CD8-positive, alpha-beta T cell (primary cell): ENCODE measurements at regions of chr9 and their contacts with region 1.

Region 1: DNA sequence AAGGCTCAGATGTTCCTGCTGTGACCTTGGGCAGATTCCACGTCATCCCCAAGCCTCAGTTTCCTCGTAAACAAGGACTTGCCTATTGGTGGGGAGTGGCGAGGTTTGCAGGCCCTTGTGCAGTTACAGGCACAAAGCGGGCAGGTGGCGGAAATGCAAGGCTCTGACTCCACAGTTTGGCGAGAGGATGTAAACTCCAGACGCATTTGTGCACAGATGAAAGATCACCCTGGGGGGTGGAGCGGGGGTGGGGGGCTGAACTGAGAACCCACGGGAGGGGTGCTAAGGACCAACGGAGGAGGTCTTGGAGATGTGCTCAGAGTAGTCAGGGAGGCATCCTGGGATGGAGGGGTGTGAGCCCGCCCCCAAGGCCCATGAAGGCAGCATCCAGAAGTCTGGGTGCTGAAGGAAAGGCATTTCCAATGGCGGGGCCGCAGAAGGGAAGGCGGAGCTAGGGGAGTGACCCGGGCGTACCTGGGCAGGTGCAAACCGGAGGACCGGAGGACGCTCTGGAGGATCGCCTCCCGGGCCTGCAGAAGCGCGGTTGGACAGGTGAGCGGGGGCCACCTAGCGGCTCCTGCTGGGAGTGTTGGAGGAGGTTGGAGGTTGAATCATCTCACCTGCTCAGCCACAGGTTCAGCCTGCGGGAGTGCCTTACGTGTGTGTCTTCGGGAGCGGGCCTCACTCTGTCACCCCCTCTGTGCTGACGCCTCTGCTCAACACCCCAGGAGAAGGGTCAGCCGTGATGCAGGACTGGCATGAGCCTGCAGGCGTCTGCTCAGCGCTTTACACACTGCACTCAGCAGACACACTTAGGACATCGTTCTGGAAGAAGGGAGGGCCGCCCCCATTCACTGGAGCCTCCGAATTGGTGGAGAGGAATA is 1.9 kb upstream of the FIBCD1 start:
- DNase-seq: peak; percentile 55 to 82 (median 68)
- ATAC-seq: peak; percentile 88
- H3K4me3 ChIP-seq: peak overlapping the region in 1 of 2 experiments; percentile 1
- H3K4me3 Mint-ChIP-seq: peak overlapping the region; percentile 18
- H3K27ac ChIP-seq: no peak overlapping the region
- H3K27ac Mint-ChIP-seq: no peak overlapping the region
- H3K4me1 ChIP-seq: peaks cover 10% of the 10 kb centered on the region
- H3K4me1 Mint-ChIP-seq: peaks cover 7% of the 10 kb centered on the region
- H3K27me3 ChIP-seq: peaks cover 5 to 6% of the 10 kb centered on the region in 2 experiments
- H3K27me3 Mint-ChIP-seq: peaks cover 46% of the 10 kb centered on the region
- CTCF ChIP-seq: peak; percentile 68

Region 2: DNA sequence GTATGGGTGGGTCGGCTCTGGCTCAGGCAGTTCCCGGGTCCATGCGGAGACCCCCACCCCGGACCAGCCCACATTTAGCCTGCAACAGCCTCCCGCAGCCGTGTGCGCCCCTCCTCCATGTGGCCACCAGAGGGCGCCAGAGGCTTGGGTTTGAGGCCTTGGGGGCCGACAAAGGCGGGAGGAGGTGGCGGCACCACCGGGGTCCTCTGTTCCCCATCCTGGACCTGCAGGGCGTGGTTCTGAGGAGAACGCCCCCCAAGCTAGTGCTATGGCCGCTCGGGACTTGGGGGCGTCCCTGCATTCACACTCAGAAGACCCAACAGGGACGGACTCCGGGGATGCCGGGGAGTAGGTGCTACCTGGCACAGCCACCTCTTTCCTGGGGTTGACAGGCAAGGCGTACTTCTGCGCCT is 479.7 kb before region 1 on chr9:
- CTCF ChIA-PET with region 1: no interaction called
- POLR2A ChIA-PET with region 1: no interaction called
- intact Hi-C with region 1: loop called (anchors 2 to 5 kb)
- DNase-seq: peak; percentile 48 to 86 (median 71)
- ATAC-seq: peak; percentile 65
- H3K4me3 ChIP-seq: no peak overlapping the region
- H3K4me3 Mint-ChIP-seq: no peak overlapping the region
- H3K27ac ChIP-seq: no peak overlapping the region
- H3K27ac Mint-ChIP-seq: no peak overlapping the region
- H3K4me1 ChIP-seq: no peaks in the 10 kb centered on the region
- H3K4me1 Mint-ChIP-seq: no peaks in the 10 kb centered on the region
- H3K27me3 ChIP-seq: no peaks in the 10 kb centered on the region
- H3K27me3 Mint-ChIP-seq: peaks cover 24% of the 10 kb centered on the region
- CTCF ChIP-seq: peak; percentile 82

Region 3: DNA sequence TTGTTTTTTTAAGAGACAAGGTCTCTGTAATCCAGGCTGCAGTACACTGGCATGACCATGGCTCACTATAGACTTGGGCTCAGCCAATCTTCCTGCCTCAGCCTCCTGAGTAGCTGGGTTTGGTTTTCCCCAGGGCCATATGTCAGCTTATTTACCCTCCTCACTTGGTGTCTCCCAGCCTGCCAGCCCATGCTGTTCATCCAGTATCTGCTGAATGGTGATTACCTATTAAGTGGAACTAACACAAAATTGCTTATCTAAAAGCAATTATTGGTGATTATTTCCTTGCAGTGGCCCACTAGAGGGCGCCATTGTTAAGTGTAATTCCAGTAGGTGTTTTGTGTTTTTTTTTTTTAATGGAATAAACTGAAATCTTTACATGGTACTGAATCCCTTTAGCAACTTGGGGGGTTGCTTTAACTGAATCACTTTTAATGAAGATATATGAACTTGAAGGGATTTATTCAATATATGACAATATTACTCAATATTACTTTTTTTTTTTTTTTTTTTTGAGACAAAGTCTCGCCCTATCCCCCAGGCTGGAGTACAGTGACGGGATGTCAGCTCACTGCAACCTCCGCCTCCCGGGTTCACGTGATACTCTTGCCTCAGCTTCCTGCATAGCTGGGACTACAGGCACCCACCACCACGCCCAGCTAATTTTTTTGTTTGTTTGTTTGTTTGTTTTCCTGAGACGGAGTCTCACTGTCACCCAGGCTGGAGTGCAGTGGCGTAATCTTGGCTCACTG is 233.5 kb before region 1 on chr9:
- CTCF ChIA-PET with region 1: interaction called, 3 read pairs
- POLR2A ChIA-PET with region 1: no interaction called
- intact Hi-C with region 1: loop called in 1 of 2 experiments (anchors 1 kb)
- DNase-seq: peak; percentile 18 to 83 (median 77)
- ATAC-seq: peak; percentile 48
- H3K4me3 ChIP-seq: no peak overlapping the region
- H3K4me3 Mint-ChIP-seq: no peak overlapping the region
- H3K27ac ChIP-seq: no peak overlapping the region
- H3K27ac Mint-ChIP-seq: no peak overlapping the region
- H3K4me1 ChIP-seq: no peaks in the 10 kb centered on the region
- H3K4me1 Mint-ChIP-seq: peaks cover 3% of the 10 kb centered on the region
- H3K27me3 ChIP-seq: no peaks in the 10 kb centered on the region
- H3K27me3 Mint-ChIP-seq: no peaks in the 10 kb centered on the region
- CTCF ChIP-seq: peak; percentile 93

Region 4: DNA sequence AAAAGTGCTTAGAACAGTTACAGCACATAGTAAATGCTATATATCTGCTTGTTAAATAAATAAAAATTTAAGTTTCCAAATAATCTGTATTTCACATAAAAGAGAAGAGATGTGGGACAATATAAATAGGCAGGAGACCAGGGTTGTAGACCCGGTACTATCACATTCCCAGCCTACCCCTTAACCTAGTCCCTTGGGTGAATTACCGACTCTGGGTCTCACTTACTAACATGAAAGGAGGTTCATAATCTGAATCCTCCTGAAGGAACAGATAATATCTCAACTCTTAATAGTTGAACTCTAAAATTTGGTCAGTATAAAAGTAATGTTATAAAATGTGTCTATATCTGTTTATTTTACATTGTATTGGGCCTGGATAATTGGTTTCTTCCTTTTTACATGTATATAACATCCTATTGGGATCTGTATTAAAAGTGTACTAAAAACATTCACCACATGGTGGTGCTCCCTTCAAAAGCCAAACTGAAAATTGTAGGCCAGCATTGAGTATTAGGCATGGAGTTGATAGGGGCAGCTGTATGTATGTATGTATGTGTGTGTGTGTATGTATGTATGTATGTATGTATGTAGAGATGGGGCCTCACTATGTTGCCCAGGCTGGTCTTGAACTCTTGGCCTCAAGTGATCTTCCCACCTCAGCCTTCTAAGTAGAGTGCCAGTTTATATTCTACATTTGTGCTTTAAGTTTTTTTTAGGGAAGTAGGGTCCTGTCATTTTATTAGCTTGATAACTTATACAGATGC is 170.1 kb before region 1 on chr9:
- CTCF ChIA-PET with region 1: no interaction called
- POLR2A ChIA-PET with region 1: no interaction called
- intact Hi-C with region 1: loop called (anchors 5 kb)
- DNase-seq: peak in 2 of 9 experiments; percentile 53 to 63
- ATAC-seq: peak; percentile 77
- H3K4me3 ChIP-seq: no peak overlapping the region
- H3K4me3 Mint-ChIP-seq: no peak overlapping the region
- H3K27ac ChIP-seq: no peak overlapping the region
- H3K27ac Mint-ChIP-seq: no peak overlapping the region
- H3K4me1 ChIP-seq: peaks cover 12% of the 10 kb centered on the region
- H3K4me1 Mint-ChIP-seq: peaks cover 47% of the 10 kb centered on the region
- H3K27me3 ChIP-seq: no peaks in the 10 kb centered on the region
- H3K27me3 Mint-ChIP-seq: no peaks in the 10 kb centered on the region
- CTCF ChIP-seq: peak; percentile 70